Endothelial cell of umbilical vein (primary cell): ENCODE measurements at regions of chr11 and their contacts with region 1.

Region 1: GRCh38 chr11:66976048-66976467 is 954 bp downstream of the C11orf86 start:
- DNase-seq: peak; percentile 51
- H3K4me3 ChIP-seq: no peak overlapping the region
- H3K27ac ChIP-seq: no peak overlapping the region
- H3K4me1 ChIP-seq: peaks cover 4% of the 10 kb centered on the region
- H3K27me3 ChIP-seq: no peaks in the 10 kb centered on the region
- CTCF ChIP-seq: peak; percentile 69 to 82
- POLR2A ChIP-seq: no peak

Region 2: DNA sequence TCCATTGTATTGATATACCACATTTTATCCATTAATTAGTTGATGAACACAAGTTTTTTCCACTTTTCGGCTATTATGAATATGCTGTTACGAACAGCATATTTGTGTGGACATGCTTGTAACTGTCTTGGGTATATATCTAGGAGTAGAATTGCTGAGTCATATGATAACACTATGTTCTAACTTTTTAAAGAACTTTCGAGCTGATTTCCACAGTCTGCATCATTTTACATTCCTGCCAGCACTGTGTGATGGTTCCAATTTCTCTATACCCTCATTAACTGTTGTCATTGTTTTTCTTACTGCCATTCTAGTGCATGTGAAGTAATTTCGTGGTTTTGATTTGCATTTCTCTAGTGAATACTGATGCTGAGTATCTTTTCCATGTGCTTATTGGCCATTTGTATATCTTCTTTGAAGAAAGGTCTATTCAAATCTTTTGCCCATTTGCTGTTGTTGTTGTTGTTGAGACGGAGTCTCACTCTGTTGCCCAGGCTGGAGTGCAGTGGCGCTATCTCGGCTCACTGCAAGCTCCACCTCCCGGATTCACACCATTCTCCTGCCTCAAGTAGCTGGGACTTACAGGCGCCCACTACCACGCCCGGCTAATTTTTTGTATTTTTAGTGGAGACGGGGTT is 140.2 kb before region 1 on chr11:
- CTCF ChIA-PET with region 1: interaction called, 20 read pairs
- POLR2A ChIA-PET with region 1: no interaction called
- dilution Hi-C with region 1: no loop called
- intact Hi-C with region 1: loop called (anchors 1 kb)
- DNase-seq: no peak
- H3K4me3 ChIP-seq: no peak overlapping the region
- H3K27ac ChIP-seq: no peak overlapping the region
- H3K4me1 ChIP-seq: peaks cover 4% of the 10 kb centered on the region
- H3K27me3 ChIP-seq: no peaks in the 10 kb centered on the region
- CTCF ChIP-seq: no peak
- POLR2A ChIP-seq: no peak

Region 3: GRCh38 chr11:66855574-66856495 is 120.2 kb before region 1 on chr11:
- CTCF ChIA-PET with region 1: interaction called, 12 read pairs
- POLR2A ChIA-PET with region 1: no interaction called
- dilution Hi-C with region 1: no loop called
- intact Hi-C with region 1: loop called (anchors 2 kb)
- DNase-seq: peak; percentile 85
- H3K4me3 ChIP-seq: peak overlapping the region; percentile 29 to 59 (median 54)
- H3K27ac ChIP-seq: peak overlapping the region; percentile 56
- H3K4me1 ChIP-seq: peaks cover 9% of the 10 kb centered on the region
- H3K27me3 ChIP-seq: no peaks in the 10 kb centered on the region
- CTCF ChIP-seq: no peak
- POLR2A ChIP-seq: peak; percentile 71

Region 4: GRCh38 chr11:66891851-66892660 is 84.0 kb before region 1 on chr11:
- CTCF ChIA-PET with region 1: interaction called, 13 read pairs
- POLR2A ChIA-PET with region 1: no interaction called
- dilution Hi-C with region 1: no loop called
- intact Hi-C with region 1: no loop called
- DNase-seq: peak; percentile 83
- H3K4me3 ChIP-seq: no peak overlapping the region
- H3K27ac ChIP-seq: peak overlapping the region; percentile 18
- H3K4me1 ChIP-seq: peaks cover 7% of the 10 kb centered on the region
- H3K27me3 ChIP-seq: no peaks in the 10 kb centered on the region
- CTCF ChIP-seq: no peak
- POLR2A ChIP-seq: no peak

Region 5: DNA sequence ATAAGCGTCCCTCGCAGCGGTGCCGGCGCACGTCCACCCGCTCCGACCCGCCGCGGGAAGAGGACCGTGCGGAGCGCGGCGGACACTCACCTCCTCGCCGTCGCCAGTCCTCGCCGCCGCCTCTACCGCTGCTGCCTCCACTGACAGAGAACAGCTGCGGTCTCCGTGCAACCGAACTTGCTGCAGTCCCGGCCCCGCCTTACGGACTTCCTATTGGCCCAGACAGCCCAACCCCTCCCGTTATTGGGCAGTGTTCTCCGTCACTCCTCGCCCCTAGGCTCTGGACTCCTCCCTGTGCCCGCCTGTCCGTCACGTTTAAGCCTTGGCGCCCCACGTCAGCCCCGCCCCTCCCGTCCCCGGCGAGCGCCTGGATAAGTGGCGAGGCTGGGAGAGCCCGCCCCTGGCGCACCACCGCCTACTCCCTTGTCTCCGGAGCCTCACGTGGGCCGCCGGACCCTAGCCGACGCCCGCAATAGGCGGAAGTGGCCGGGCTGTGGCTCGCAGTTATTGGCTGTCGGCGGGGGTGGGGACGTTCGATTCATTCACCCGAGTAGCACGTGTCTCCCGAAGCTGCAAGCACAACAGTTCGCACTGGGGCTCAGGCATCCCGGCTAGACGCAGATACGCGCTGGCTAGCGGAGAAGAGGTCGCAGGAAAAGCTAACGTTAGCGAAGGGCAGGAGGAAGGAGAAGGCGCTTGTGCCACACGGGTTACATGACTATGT is 17.7 kb before region 1 on chr11 and contains the start of gene PC:
- CTCF ChIA-PET with region 1: interaction called, 23 read pairs
- POLR2A ChIA-PET with region 1: no interaction called
- dilution Hi-C with region 1: no loop called
- intact Hi-C with region 1: no loop called
- DNase-seq: peak; percentile 100
- H3K4me3 ChIP-seq: peak within 1 kb of the TSS; percentile 27 to 73 (median 55)
- H3K27ac ChIP-seq: no peak within 1 kb of the TSS
- H3K4me1 ChIP-seq: peaks cover 4% of the 10 kb centered on the region
- H3K27me3 ChIP-seq: no peaks in the 10 kb centered on the region
- CTCF ChIP-seq: no peak
- POLR2A ChIP-seq: no peak
- total RNA-seq, gene PC: 15.6 and 17.5 TPM in 2 replicates